Mammary epithelial cell (primary cell): ENCODE measurements at regions of chr1 and their contacts with region 1.

Region 1: GRCh38 chr1:52056163-52056936 is at the start of gene BTF3L4:
- DNase-seq: peak; percentile 91
- H3K4me3 ChIP-seq: peak within 1 kb of the TSS; percentile 60 to 96 (median 71)
- H3K27ac ChIP-seq: peak within 1 kb of the TSS; percentile 77
- H3K4me1 ChIP-seq: peaks cover 29% of the 10 kb centered on the region
- H3K27me3 ChIP-seq: no peaks in the 10 kb centered on the region
- CTCF ChIP-seq: no peak
- total RNA-seq, gene BTF3L4: 53.7 to 63.2 TPM

Region 2: GRCh38 chr1:52033190-52034049 is 22.9 kb before region 1 on chr1 and contains the start of gene KTI12:
- CTCF ChIA-PET with region 1: no interaction called
- dilution Hi-C with region 1: no loop called
- in situ Hi-C with region 1: no loop called
- intact Hi-C with region 1: loop called (anchors 1 kb)
- DNase-seq: peak; percentile 74
- H3K4me3 ChIP-seq: peak within 1 kb of the TSS; percentile 76 to 96 (median 95)
- H3K27ac ChIP-seq: peak within 1 kb of the TSS; percentile 78
- H3K4me1 ChIP-seq: peaks cover 3% of the 10 kb centered on the region
- H3K27me3 ChIP-seq: no peaks in the 10 kb centered on the region
- CTCF ChIP-seq: no peak
- total RNA-seq, gene KTI12: 9.2 to 10.5 TPM

Region 3: DNA sequence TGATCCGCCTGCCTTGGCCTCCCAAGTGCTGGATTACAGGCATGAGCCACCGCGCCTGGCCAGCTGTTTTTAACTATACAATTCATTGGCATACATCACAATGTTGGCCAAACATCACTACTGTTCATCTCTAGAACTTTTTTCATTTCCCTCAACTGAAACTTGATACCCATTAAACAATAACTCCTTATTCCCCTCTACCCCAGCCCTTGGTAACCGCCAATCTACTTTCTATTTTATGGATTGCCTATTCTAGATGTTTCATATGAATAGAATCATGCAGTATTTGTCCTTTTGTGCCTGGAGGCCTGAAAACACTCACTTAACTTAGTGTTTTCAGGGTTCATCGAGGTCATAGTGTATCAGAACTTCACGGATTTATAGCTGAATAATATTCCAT is 15.9 kb after region 1 on chr1:
- CTCF ChIA-PET with region 1: no interaction called
- dilution Hi-C with region 1: no loop called
- in situ Hi-C with region 1: no loop called
- intact Hi-C with region 1: loop called (anchors 2 kb)
- DNase-seq: no peak
- H3K4me3 ChIP-seq: no peak overlapping the region
- H3K27ac ChIP-seq: no peak overlapping the region
- H3K4me1 ChIP-seq: no peaks in the 10 kb centered on the region
- H3K27me3 ChIP-seq: no peaks in the 10 kb centered on the region
- CTCF ChIP-seq: no peak